Esophagus squamous epithelium (tissue), 5 donors: ENCODE measurements at regions of chr7 and their contacts with region 1.

Region 1: DNA sequence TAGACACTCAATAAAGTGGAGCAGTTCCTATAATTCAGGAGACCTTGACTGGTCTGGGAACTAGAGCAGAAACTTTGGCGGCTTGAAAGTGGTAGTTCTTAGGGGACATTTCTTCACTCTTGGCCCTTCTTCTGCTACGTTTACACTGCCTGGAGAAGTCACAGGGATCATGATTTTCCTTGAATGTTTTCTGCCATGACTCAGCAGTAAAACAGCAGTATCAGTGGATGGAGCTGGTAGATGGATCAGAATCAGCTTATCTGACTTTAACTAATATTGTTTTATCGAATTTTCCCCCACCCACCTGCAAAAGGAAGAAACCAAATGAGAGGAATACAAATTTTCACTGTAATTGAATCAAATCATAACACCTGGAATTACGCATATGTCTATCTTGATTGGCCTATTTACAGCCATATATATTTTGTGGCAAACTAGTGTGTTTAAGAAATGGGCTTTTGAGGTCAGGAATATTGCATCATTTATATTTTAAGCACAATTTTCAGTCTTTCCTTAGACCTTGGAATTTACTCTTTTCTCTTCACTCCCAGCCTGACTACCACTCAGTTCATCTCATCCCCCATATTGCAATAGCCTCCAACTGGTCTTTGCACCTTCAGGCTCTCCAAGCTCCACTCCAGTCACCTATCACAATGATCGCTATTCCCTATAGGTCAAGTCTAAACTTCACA is 14.9 kb upstream of the DLX5 start:
- DNase-seq: no peak
- H3K4me3 ChIP-seq: no peak overlapping the region
- H3K27ac ChIP-seq: no peak overlapping the region
- H3K4me1 ChIP-seq: no peaks in the 10 kb centered on the region
- H3K27me3 ChIP-seq: peaks cover 0 to 73% (median 0%) of the 10 kb centered on the region in 4 donors
- CTCF ChIP-seq: no peak
- POLR2A ChIP-seq: no peak

Region 2: GRCh38 chr7:95916573-95917297 is 1122.8 kb before region 1 on chr7:
- intact Hi-C with region 1: loop called (anchors 10 kb)
- DNase-seq: no peak
- H3K4me3 ChIP-seq: peak overlapping the region in 1 of 4 donors; percentile 3
- H3K27ac ChIP-seq: no peak overlapping the region
- H3K4me1 ChIP-seq: peaks cover 0 to 6% (median 0%) of the 10 kb centered on the region in 3 donors
- H3K27me3 ChIP-seq: peaks cover 0 to 3% (median 0%) of the 10 kb centered on the region in 4 donors
- CTCF ChIP-seq: peak; percentile 79 to 92 (median 88)
- POLR2A ChIP-seq: no peak

Region 3: GRCh38 chr7:97204821-97205220 is 165.3 kb after region 1 on chr7:
- intact Hi-C with region 1: no loop called
- DNase-seq: no peak
- H3K4me3 ChIP-seq: no peak overlapping the region
- H3K27ac ChIP-seq: no peak overlapping the region
- H3K4me1 ChIP-seq: no peaks in the 10 kb centered on the region
- H3K27me3 ChIP-seq: no peaks in the 10 kb centered on the region
- CTCF ChIP-seq: no peak
- POLR2A ChIP-seq: no peak

Region 4: GRCh38 chr7:98200364-98200763 is 1160.8 kb after region 1 on chr7:
- intact Hi-C with region 1: no loop called
- DNase-seq: no peak
- H3K4me3 ChIP-seq: no peak overlapping the region
- H3K27ac ChIP-seq: no peak overlapping the region
- H3K4me1 ChIP-seq: no peaks in the 10 kb centered on the region
- H3K27me3 ChIP-seq: no peaks in the 10 kb centered on the region
- CTCF ChIP-seq: no peak
- POLR2A ChIP-seq: no peak